HepG2 (cell line): ENCODE measurements at regions of chr1 and their contacts with region 1.

Region 1: DNA sequence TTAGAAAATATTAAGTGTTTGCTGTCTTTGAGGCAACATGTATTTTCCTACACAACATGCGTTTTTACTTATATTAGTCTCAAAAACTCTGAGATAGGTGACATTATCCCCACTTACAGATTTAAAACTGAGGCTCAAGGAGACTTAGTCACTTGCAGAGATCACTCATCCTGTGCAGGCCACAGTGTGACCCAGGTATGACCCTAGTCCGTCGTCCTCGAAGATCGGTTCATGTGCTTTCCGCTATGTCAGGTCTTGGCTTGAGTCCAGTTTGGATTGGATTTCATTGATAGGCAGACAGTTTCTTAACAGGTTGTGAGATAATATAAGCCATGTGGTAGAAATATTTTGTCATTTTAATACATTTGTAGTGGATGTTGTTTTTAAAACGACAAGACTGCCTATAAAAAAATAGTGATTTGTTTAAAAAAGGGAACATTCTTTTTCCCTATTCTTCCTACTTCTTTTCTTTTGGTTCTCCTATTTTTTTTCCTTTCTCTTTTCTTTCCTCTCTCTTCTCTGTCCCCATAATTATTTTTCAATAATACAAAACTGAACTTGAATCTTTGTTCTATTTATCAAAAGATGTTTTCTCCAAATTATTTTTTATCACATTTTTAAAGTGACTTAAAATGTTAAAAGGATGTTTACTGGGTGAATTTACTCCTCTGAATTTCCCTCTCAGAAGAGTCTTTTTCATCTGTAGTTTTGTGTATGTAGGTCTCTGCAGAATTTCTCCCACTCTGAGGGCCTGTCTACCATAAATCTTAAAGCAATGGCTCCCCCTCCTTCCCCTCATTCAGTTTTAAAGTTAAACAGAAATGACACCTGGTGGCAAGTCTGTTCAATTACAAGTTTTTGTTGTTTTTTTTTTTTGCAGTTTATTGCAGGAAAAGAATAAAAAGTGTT is 81.8 kb downstream of the PHTF1 start:
- DNase-seq: peak; percentile 35
- ATAC-seq: no peak; the same call in 2 of the 3 replicates
- H3K4me3 ChIP-seq: no peak overlapping the region
- H3K27ac ChIP-seq: no peak overlapping the region
- H3K4me1 ChIP-seq: no peaks in the 10 kb centered on the region
- H3K27me3 ChIP-seq: no peaks in the 10 kb centered on the region
- CTCF ChIP-seq: peak; percentile 64
- EP300 ChIP-seq: no peak
- POLR2A ChIP-seq: no peak
- RAD21 ChIP-seq: no peak

Region 2: GRCh38 chr1:113072757-113073478 is 604.6 kb before region 1 on chr1 and contains the start of gene LRIG2:
- CTCF ChIA-PET with region 1: interaction called, 3 read pairs
- POLR2A ChIA-PET with region 1: interaction called, 3 read pairs
- in situ Hi-C with region 1: no loop called
- intact Hi-C with region 1: loop called (anchors 2 kb)
- DNase-seq: peak; percentile 91
- ATAC-seq: peak; percentile 97
- H3K4me3 ChIP-seq: peak within 1 kb of the TSS; percentile 80 to 91 (median 86)
- H3K27ac ChIP-seq: peak within 1 kb of the TSS; percentile 81
- H3K4me1 ChIP-seq: peaks cover 35% of the 10 kb centered on the region
- H3K27me3 ChIP-seq: no peaks in the 10 kb centered on the region
- CTCF ChIP-seq: peak; percentile 81
- EP300 ChIP-seq: 0 out of 4 replicates have a peak, but pooled peaks of 1 of the 2 experiments have one; percentile 10
- POLR2A ChIP-seq: peak; percentile 88 to 98
- RAD21 ChIP-seq: peak; percentile 64
- total RNA-seq, gene LRIG2: 3.3 and 8.1 TPM in 2 replicates

Region 3: DNA sequence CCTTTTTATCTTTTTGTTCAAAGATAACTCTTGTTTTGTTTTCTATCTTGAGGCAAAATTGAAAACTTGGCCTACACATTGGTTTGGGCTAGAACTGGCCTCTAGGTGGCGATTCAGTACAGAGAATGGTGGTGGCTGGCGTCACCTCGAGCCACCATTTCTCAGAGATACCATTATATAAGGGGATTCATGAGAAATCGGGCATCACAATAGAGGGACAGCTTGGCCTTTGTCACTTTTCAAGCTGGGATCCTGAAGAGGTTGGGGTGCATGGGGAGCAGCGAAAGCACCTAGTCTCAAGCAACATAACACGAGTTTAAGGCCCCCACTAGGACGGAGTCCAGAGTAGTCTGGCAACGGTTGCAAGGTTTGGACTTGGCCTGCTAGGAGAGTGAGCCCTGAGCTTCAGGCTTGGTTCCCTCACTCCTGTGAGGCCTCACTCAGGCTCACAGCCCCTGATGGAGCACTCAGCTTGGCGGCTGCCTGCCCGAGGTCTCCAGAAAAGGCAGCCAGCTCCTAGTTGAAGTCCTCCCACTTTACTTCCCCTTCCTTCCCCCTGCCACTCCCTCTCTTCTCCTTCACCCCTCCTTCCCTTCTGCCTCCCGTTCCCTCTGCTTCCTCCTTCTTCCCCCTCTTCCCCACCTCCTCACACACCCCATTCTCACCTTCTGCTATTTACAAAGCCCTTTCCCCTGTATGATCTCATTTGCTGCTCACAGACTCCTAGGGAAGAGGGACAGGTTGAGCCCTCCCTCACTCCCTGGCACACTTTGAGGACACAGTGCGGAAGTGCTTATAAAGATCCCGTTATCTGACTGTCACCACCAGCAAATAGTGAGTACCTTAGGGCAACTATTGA is 536.7 kb before region 1 on chr1:
- CTCF ChIA-PET with region 1: interaction called, 17 read pairs
- POLR2A ChIA-PET with region 1: no interaction called
- in situ Hi-C with region 1: loop called (anchors 5 kb)
- intact Hi-C with region 1: loop called (anchors 1 kb)
- DNase-seq: peak; percentile 68
- ATAC-seq: peak; percentile 94
- H3K4me3 ChIP-seq: peak overlapping the region; percentile 55 to 78 (median 56)
- H3K27ac ChIP-seq: peak overlapping the region; percentile 16
- H3K4me1 ChIP-seq: peaks cover 19% of the 10 kb centered on the region
- H3K27me3 ChIP-seq: no peaks in the 10 kb centered on the region
- CTCF ChIP-seq: peak; percentile 93
- EP300 ChIP-seq: no peak
- POLR2A ChIP-seq: no peak
- RAD21 ChIP-seq: peak; percentile 91

Region 4: GRCh38 chr1:113488576-113489177 is 188.8 kb before region 1 on chr1:
- CTCF ChIA-PET with region 1: interaction called, 5 read pairs
- POLR2A ChIA-PET with region 1: no interaction called
- in situ Hi-C with region 1: loop called (anchors 25 kb)
- intact Hi-C with region 1: loop called (anchors 1 kb)
- DNase-seq: peak; percentile 13
- ATAC-seq: peak; percentile 93
- H3K4me3 ChIP-seq: no peak overlapping the region
- H3K27ac ChIP-seq: no peak overlapping the region
- H3K4me1 ChIP-seq: no peaks in the 10 kb centered on the region
- H3K27me3 ChIP-seq: no peaks in the 10 kb centered on the region
- CTCF ChIP-seq: peak; percentile 70
- EP300 ChIP-seq: no peak
- POLR2A ChIP-seq: no peak
- RAD21 ChIP-seq: peak; percentile 71

Region 5: GRCh38 chr1:113605146-113605545 is 72.4 kb before region 1 on chr1:
- CTCF ChIA-PET with region 1: no interaction called
- POLR2A ChIA-PET with region 1: no interaction called
- in situ Hi-C with region 1: no loop called
- intact Hi-C with region 1: no loop called
- DNase-seq: no peak
- ATAC-seq: no peak
- H3K4me3 ChIP-seq: no peak overlapping the region
- H3K27ac ChIP-seq: no peak overlapping the region
- H3K4me1 ChIP-seq: no peaks in the 10 kb centered on the region
- H3K27me3 ChIP-seq: no peaks in the 10 kb centered on the region
- CTCF ChIP-seq: no peak
- EP300 ChIP-seq: no peak
- POLR2A ChIP-seq: no peak
- RAD21 ChIP-seq: no peak

Region 6: DNA sequence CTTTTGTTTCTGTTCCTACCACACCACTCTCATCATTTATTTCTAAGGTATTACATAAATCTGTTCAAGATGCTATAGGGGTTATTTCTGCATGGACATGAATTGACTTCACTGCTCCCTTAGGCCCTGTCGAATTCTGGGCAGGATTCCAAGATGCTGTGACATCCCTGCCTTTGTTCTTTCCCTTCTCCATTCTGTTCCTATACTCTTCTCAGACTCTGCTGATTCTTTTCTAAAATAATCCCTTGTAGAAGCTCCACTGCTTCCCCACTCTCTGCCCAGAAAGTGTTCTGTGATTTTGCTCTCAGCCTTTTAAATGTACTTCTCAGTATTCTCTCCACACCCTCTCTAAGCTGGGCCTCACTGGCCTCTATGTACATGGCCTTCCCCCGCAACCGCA is 17.4 kb before region 1 on chr1:
- CTCF ChIA-PET with region 1: no interaction called
- POLR2A ChIA-PET with region 1: no interaction called
- in situ Hi-C with region 1: no loop called
- intact Hi-C with region 1: no loop called
- DNase-seq: no peak
- ATAC-seq: no peak
- H3K4me3 ChIP-seq: no peak overlapping the region
- H3K27ac ChIP-seq: no peak overlapping the region
- H3K4me1 ChIP-seq: no peaks in the 10 kb centered on the region
- H3K27me3 ChIP-seq: no peaks in the 10 kb centered on the region
- CTCF ChIP-seq: no peak
- EP300 ChIP-seq: no peak
- POLR2A ChIP-seq: no peak
- RAD21 ChIP-seq: no peak